Esophagus squamous epithelium (tissue), 5 donors: ENCODE measurements at regions of chr17 and their contacts with region 1.

Region 1: GRCh38 chr17:82236142-82236981 is 7.5 kb downstream of the SLC16A3 start:
- DNase-seq: no peak
- H3K4me3 ChIP-seq: no peak overlapping the region
- H3K27ac ChIP-seq: peak overlapping the region; percentile 31 to 69 (median 45)
- H3K4me1 ChIP-seq: peaks cover 64 to 98% (median 67%) of the 10 kb centered on the region in 3 donors
- H3K27me3 ChIP-seq: no peaks in the 10 kb centered on the region
- CTCF ChIP-seq: peak; percentile 89 to 94 (median 93)
- POLR2A ChIP-seq: no peak

Region 2: GRCh38 chr17:82320956-82321927 is 84.9 kb after region 1 on chr17:
- intact Hi-C with region 1: loop called (anchors 5 kb)
- DNase-seq: no peak
- H3K4me3 ChIP-seq: peak overlapping the region in 2 of 4 donors; percentile 25 to 29
- H3K27ac ChIP-seq: no peak overlapping the region
- H3K4me1 ChIP-seq: peaks cover 0 to 27% (median 6%) of the 10 kb centered on the region in 3 donors
- H3K27me3 ChIP-seq: peaks cover 0 to 76% (median 0%) of the 10 kb centered on the region in 4 donors
- CTCF ChIP-seq: peak; percentile 89 to 98 (median 94)
- POLR2A ChIP-seq: no peak